Caco-2 (cell line): ENCODE measurements at regions of chr12 and their contacts with region 1.

Region 1: DNA sequence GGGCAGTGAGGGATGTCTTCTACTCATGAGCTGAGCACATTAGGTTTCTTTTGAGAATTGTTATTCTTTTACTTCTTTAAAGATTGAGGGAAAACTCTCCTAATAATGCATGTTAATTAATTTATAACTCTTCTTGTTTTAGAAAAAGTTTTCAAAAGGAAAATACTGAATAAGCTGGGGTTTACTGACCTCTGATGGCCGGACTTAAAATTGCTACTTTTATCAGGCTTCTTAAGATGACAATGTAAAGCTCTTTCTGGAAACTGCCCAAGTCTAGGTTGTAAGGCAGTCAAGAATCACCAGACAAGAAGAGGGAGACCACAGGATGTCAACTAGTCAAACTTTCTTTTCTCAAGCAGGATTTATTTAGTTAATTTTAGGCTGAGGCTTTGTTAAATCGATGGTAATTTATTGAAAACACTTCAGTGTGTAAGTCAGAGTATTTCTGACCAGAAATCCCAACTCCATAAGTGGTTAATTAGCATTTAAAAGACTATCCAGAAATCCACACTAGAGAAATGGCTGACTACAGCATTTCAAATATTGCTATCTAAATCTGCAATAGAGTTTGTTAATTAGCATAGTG is 82.1 kb downstream of the AVPR1A start:
- DNase-seq: peak in 1 of 2 experiments; percentile 39
- H3K4me3 ChIP-seq: no peak overlapping the region
- H3K4me3 Mint-ChIP-seq: no peak overlapping the region
- H3K27ac Mint-ChIP-seq: no peak overlapping the region
- H3K4me1 ChIP-seq: peaks cover 26% of the 10 kb centered on the region
- H3K4me1 Mint-ChIP-seq: peaks cover 33% of the 10 kb centered on the region
- H3K27me3 ChIP-seq: no peaks in the 10 kb centered on the region
- H3K27me3 Mint-ChIP-seq: no peaks in the 10 kb centered on the region
- CTCF ChIP-seq: peak; percentile 61 to 64

Region 2: DNA sequence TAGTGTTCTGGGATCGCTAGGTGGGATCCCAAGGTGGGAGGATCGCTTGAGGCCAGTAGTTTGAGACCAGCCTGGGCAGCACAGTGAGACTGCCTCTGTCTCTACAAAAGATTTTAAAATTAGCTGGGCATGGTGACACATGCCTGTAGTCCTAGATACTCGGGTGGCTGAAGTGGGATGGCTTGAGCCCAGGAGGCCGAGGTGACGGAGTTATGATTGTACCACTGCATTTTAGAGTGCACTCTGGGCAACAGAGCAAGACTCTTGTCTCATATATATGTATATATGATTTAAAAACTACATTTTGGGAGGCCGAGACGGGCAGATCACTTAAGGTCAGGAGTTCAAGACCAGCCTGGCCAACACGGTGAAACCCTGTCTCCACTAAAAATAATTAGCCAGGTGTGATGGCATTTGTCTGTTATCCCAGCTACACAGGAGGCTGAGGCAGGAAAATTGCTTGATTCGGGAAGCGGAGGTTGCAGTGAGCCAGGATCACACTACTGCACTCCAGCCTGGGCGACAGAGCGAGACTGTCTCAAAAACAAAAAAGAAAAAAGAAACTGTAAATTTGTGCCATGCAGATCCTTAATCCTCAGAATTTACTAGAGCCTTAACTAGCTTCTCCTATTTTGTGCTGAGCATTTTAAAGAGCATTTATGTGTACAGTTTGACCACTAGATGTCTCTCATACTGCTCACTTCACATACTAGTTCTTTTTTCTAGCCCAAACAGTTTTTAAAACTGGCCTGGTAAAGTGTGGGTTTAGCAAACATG is 487.5 kb before region 1 on chr12:
- CTCF ChIA-PET with region 1: interaction called, 11 read pairs
- POLR2A ChIA-PET with region 1: no interaction called
- intact Hi-C with region 1: loop called (anchors 1 kb)
- DNase-seq: peak in 1 of 2 experiments; percentile 14
- H3K4me3 ChIP-seq: no peak overlapping the region
- H3K4me3 Mint-ChIP-seq: no peak overlapping the region
- H3K27ac Mint-ChIP-seq: no peak overlapping the region
- H3K4me1 ChIP-seq: no peaks in the 10 kb centered on the region
- H3K4me1 Mint-ChIP-seq: peaks cover 7% of the 10 kb centered on the region
- H3K27me3 ChIP-seq: no peaks in the 10 kb centered on the region
- H3K27me3 Mint-ChIP-seq: no peaks in the 10 kb centered on the region
- CTCF ChIP-seq: peak; percentile 37 to 75

Region 3: GRCh38 chr12:62603061-62603810 is 465.7 kb before region 1 on chr12:
- CTCF ChIA-PET with region 1: interaction called, 4 read pairs
- POLR2A ChIA-PET with region 1: interaction called, 3 read pairs
- intact Hi-C with region 1: loop called (anchors 10 kb)
- DNase-seq: peak; percentile 85 to 91
- H3K4me3 ChIP-seq: peak overlapping the region; percentile 93
- H3K4me3 Mint-ChIP-seq: peak overlapping the region; percentile 95
- H3K27ac Mint-ChIP-seq: peak overlapping the region; percentile 100
- H3K4me1 ChIP-seq: peaks cover 23% of the 10 kb centered on the region
- H3K4me1 Mint-ChIP-seq: peaks cover 9% of the 10 kb centered on the region
- H3K27me3 ChIP-seq: no peaks in the 10 kb centered on the region
- H3K27me3 Mint-ChIP-seq: no peaks in the 10 kb centered on the region
- CTCF ChIP-seq: peak in 1 of 2 experiments; percentile 58

Region 4: DNA sequence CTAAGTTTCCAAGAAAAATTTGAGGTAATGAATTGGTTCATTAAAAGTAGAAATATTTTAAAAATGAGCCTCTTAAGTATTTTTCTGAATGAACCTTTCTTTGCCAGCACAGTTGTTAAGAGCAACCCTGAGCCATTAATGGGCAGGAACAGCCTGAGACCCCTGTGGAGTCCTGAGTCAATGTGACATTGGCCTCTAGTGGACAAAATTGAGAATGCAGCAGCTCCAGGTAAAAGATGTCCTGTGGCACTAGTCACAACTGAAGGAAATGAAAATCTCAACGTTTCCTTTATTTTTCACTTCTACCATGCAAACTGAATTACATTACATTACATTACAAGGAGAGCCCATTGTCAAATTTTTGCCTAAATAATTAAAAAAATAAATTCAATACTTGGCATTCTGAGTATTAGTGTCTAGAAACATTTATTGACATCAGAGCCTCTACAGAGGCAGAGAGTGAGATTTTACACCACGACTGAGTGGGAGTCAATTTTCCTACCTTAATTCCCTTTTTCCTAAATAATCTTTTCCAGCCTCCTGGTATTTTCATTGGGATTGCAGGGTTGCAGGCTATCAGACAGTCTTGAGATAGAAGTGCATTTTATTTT is 269.7 kb before region 1 on chr12:
- CTCF ChIA-PET with region 1: interaction called, 10 read pairs
- POLR2A ChIA-PET with region 1: no interaction called
- intact Hi-C with region 1: loop called (anchors 1 kb)
- DNase-seq: peak; percentile 73 to 78
- H3K4me3 ChIP-seq: no peak overlapping the region
- H3K4me3 Mint-ChIP-seq: no peak overlapping the region
- H3K27ac Mint-ChIP-seq: peak overlapping the region; percentile 80
- H3K4me1 ChIP-seq: peaks cover 64% of the 10 kb centered on the region
- H3K4me1 Mint-ChIP-seq: peaks cover 37% of the 10 kb centered on the region
- H3K27me3 ChIP-seq: no peaks in the 10 kb centered on the region
- H3K27me3 Mint-ChIP-seq: no peaks in the 10 kb centered on the region
- CTCF ChIP-seq: peak; percentile 79 to 86

Region 5: DNA sequence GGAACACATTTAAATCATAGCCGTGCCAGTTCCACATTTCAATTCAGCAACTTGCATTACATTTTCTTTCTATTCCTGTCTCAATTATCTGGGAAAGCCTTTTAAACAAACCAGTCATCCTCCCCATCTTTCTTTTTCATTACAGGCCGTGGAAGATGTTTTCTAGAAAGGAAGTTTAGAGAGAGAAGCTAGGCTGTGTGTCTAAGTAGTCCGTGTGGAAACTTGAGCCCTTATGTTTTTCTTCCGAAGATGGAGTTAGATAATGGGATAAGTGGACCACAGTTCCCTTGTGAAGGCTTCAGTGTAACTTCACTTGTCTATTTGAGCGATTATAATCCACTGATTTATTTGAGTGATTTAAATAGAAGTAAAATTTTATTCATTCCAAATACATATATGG is 121.6 kb before region 1 on chr12:
- CTCF ChIA-PET with region 1: no interaction called
- POLR2A ChIA-PET with region 1: no interaction called
- intact Hi-C with region 1: no loop called
- DNase-seq: no peak
- H3K4me3 ChIP-seq: no peak overlapping the region
- H3K4me3 Mint-ChIP-seq: no peak overlapping the region
- H3K27ac Mint-ChIP-seq: no peak overlapping the region
- H3K4me1 ChIP-seq: 0 out of 2 replicates have a peak, but pooled peaks cover 9% of the 10 kb centered on the region
- H3K4me1 Mint-ChIP-seq: peaks cover 26% of the 10 kb centered on the region
- H3K27me3 ChIP-seq: no peaks in the 10 kb centered on the region
- H3K27me3 Mint-ChIP-seq: no peaks in the 10 kb centered on the region
- CTCF ChIP-seq: no peak

Region 6: GRCh38 chr12:62998454-62998853 is 70.5 kb before region 1 on chr12:
- CTCF ChIA-PET with region 1: no interaction called
- POLR2A ChIA-PET with region 1: no interaction called
- intact Hi-C with region 1: loop called (anchors 2 kb)
- DNase-seq: peak; percentile 65 to 80
- H3K4me3 ChIP-seq: no peak overlapping the region
- H3K4me3 Mint-ChIP-seq: peak overlapping the region; percentile 67
- H3K27ac Mint-ChIP-seq: peak overlapping the region; percentile 91
- H3K4me1 ChIP-seq: peaks cover 43% of the 10 kb centered on the region
- H3K4me1 Mint-ChIP-seq: peaks cover 30% of the 10 kb centered on the region
- H3K27me3 ChIP-seq: no peaks in the 10 kb centered on the region
- H3K27me3 Mint-ChIP-seq: no peaks in the 10 kb centered on the region
- CTCF ChIP-seq: no peak